ENCODE measurements at regions of chr10 and their contacts with region 1.

Region 1: DNA sequence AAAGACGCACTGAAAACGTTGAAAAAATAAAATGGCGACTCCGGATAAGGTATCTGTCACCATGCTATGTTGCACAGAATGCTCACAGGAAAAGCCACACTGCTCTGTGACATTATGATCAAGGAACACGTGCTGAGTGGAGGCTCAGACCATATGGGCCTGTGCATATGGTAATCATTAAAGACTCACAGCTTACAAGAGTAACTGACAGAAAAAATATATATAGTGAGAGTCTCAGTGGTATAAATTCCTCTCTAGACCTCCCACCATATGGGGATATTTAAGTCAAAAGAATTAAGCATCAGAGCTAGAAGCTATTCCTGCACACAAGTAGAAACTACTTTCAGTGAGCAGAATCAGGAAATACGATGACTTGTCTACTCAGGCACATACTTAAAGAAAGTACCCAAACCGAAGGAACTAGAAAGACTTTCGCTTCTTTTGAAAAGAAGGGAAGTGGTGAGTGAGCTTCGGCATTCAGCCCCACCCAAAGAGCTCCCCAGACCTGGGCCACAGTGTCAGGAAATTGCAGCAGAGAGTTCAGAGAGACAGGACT is 65.1 kb upstream of the MPP7 start:
- DNase-seq: peak in 8 of 9 donors; percentile 54 to 88 (median 83)
- ATAC-seq: peak; percentile 97
- H3K4me3 ChIP-seq: peak overlapping the region; percentile 18
- H3K4me3 Mint-ChIP-seq: peak overlapping the region; percentile 63 to 93 (median 76)
- H3K27ac ChIP-seq: peak overlapping the region; percentile 78
- H3K27ac Mint-ChIP-seq: peak overlapping the region; percentile 90 to 99 (median 96)
- H3K4me1 ChIP-seq: peaks cover 44 to 54% of the 10 kb centered on the region in 2 donors
- H3K4me1 Mint-ChIP-seq: peaks cover 39 to 80% (median 60%) of the 10 kb centered on the region in 7 donors
- H3K27me3 ChIP-seq: no peaks in the 10 kb centered on the region
- H3K27me3 Mint-ChIP-seq: peaks cover 0 to 5% (median 0%) of the 10 kb centered on the region in 5 donors

Region 2: GRCh38 chr10:28326516-28327490 is 41.2 kb before region 1 on chr10:
- CTCF ChIA-PET with region 1: interaction called, 46 read pairs
- POLR2A ChIA-PET with region 1: interaction called, 165 read pairs
- intact Hi-C with region 1: no loop called
- DNase-seq: no peak
- ATAC-seq: no peak
- H3K4me3 ChIP-seq: no peak overlapping the region
- H3K4me3 Mint-ChIP-seq: peak overlapping the region in 9 of 10 donors; percentile 26 to 67 (median 50)
- H3K27ac ChIP-seq: no peak overlapping the region
- H3K27ac Mint-ChIP-seq: peak overlapping the region in 7 of 9 donors; percentile 3 to 79 (median 41)
- H3K4me1 ChIP-seq: peaks cover 24 to 34% of the 10 kb centered on the region in 2 donors
- H3K4me1 Mint-ChIP-seq: peaks cover 20 to 79% (median 66%) of the 10 kb centered on the region in 7 donors
- H3K27me3 ChIP-seq: no peaks in the 10 kb centered on the region
- H3K27me3 Mint-ChIP-seq: no peaks in the 10 kb centered on the region

Measured in naive thymus-derived CD4-positive, alpha-beta T cell (primary cell).